Adrenal gland (tissue), 19 donors: ENCODE measurements at regions of chr16 and their contacts with region 1.

Region 1: DNA sequence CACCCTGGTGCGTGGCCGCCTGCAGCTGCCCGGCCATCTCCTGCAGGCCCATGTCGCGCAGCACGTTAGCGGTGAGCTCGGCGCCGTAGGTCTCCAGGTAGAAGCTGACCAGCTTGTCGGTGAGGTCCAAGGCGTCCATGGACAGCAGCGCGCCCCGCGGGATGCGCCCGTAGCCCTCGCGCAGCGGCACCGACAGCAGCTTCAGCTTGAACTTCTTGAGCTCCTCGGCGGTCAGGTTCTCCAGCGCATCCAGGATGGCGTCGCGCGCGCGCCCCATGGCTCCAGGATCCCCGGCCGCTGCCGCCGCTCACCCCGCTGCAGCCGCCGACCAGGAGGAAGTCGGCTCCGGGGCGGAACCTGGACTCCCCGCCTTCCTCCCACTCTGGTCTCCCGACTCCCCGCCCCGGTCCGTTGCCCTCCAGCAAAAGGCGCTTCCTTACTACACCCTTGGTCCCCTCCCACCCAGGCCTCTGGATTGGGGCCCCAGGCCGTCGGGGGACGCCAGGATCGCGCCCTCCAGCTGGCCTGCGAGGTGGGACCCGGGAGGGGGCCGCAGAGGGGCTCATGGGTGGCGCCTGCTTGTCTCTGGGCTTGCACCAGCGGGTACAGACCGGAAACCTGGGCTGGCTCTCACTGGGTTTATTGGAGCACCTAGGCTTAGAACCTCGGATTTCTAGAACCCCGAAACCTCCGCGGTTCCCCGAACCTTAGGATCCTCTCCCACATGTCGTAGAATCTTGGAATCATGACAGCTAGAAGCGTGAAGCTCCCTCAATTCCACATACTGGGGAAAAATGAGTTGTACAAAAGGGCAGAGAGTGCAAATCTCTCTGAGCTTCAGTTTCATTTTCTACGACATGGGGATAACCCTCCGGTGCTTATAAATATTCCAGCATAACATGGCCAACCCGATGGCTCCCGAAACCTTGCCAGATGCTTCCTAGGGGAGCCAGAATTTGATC is at the start of gene PYCARD:
- DNase-seq: peak in 5 of 7 donors; percentile 38 to 53 (median 46)
- H3K4me3 ChIP-seq: peak within 1 kb of the TSS in 2 of 4 donors; percentile 35 to 70
- H3K27ac ChIP-seq: peak within 1 kb of the TSS; percentile 10 to 68 (median 43)
- H3K4me1 ChIP-seq: peaks cover 0 to 19% of the 10 kb centered on the region in 2 donors
- H3K27me3 ChIP-seq: no peaks in the 10 kb centered on the region
- CTCF ChIP-seq: no peak
- POLR2A ChIP-seq: no peak
- total RNA-seq, gene PYCARD: 9.6 to 54.4 (median 23.6) TPM

Region 2: GRCh38 chr16:31440516-31441184 is 238.0 kb after region 1 on chr16:
- intact Hi-C with region 1: loop called in 1 of 2 experiments (anchors 10 kb)
- DNase-seq: no peak
- H3K4me3 ChIP-seq: no peak overlapping the region
- H3K27ac ChIP-seq: no peak overlapping the region
- H3K4me1 ChIP-seq: peaks cover 7 to 9% of the 10 kb centered on the region in 2 donors
- H3K27me3 ChIP-seq: no peaks in the 10 kb centered on the region
- CTCF ChIP-seq: no peak
- POLR2A ChIP-seq: no peak